ENCODE measurements at regions of chr3 and their contacts with region 1.

Region 1: GRCh38 chr3:51799879-51800749 is 21.1 kb upstream of the IQCF6 start:
- H3K4me3 Mint-ChIP-seq: no peak overlapping the region
- H3K27ac Mint-ChIP-seq: no peak overlapping the region
- H3K4me1 Mint-ChIP-seq: peaks cover 8% of the 10 kb centered on the region
- H3K27me3 Mint-ChIP-seq: peaks cover 12% of the 10 kb centered on the region

Region 2: DNA sequence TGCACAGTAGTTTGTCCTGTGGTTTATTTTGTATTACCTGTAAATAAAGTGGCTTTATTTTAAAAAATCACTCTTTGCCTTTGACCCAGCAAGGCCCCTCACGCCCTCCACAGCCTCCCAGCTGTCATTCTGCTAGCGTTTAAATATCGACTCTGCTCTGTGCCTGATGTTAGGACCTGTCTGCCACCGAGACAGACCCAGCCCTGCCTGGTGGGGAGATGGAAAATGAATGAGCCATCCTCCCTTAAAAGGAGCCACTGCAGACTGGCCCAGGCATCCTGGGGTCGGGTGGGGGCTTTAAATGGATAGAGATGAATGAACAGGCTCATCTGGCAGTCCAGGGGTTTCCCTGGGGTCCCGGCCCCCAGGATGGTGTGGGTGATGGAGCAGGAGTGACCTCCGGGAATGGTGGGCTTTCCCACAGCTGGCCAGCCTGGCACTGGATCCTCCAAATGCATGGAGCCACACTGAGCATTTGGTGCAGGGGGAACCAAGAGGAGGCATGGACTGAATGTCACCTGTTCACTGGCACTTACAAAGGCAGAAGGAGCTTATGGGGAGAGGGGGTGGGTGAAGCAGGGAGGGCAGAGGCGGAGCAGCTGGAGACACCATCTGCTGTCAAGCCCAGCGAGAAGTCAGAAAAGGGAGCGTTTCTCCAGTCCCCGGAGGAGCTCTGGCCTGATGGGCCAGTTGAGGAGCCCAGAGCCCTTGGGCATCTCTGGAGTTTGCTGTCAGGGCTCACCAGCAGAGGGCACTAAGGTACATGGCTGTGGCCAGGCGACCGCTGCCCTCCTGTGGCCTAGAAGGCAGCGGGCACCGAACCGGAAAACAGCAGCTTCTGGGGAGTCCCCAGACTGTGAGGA is 81.3 kb before region 1 on chr3:
- intact Hi-C with region 1: loop called (anchors 1 kb)
- H3K4me3 Mint-ChIP-seq: no peak overlapping the region
- H3K27ac Mint-ChIP-seq: no peak overlapping the region
- H3K4me1 Mint-ChIP-seq: peaks cover 6% of the 10 kb centered on the region
- H3K27me3 Mint-ChIP-seq: peaks cover 2% of the 10 kb centered on the region